ENCODE measurements at regions of chr9 and their contacts with region 1.

Region 1: DNA sequence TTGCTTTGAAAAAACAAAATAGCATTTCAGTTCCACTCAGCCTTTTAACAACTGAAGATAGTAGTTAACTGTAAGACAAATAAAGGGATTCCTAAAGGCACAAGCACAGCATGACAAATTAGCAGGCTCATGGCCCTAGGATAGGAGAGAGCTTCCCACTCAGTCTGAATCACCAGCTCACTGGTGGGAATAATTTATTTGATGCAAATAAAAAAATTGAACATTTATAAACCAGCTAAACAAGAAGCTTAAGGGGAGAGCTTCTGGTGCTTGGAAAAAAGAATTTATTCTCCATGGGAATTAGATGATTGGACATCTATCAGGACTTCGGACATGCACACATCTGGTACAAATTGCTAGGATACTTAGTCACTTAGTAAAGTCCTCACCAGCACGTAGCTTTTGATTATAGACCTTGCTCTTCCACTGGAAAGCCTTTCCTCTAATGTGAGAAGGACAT is 294.1 kb upstream of the TNC start:
- DNase-seq: peak; percentile 75
- H3K4me3 ChIP-seq: no peak overlapping the region
- H3K27ac ChIP-seq: peak overlapping the region; percentile 99
- H3K4me1 ChIP-seq: peaks cover 56% of the 10 kb centered on the region
- H3K27me3 ChIP-seq: no peaks in the 10 kb centered on the region
- CTCF ChIP-seq: no peak

Region 2: GRCh38 chr9:115164511-115164974 is 247.5 kb before region 1 on chr9:
- CTCF ChIA-PET with region 1: interaction called, 4 read pairs
- POLR2A ChIA-PET with region 1: no interaction called
- intact Hi-C with region 1: loop called (anchors 2 kb)
- DNase-seq: peak; percentile 99
- H3K4me3 ChIP-seq: no peak overlapping the region
- H3K27ac ChIP-seq: peak overlapping the region; percentile 66
- H3K4me1 ChIP-seq: peaks cover 14% of the 10 kb centered on the region
- H3K27me3 ChIP-seq: no peaks in the 10 kb centered on the region
- CTCF ChIP-seq: no peak

Region 3: DNA sequence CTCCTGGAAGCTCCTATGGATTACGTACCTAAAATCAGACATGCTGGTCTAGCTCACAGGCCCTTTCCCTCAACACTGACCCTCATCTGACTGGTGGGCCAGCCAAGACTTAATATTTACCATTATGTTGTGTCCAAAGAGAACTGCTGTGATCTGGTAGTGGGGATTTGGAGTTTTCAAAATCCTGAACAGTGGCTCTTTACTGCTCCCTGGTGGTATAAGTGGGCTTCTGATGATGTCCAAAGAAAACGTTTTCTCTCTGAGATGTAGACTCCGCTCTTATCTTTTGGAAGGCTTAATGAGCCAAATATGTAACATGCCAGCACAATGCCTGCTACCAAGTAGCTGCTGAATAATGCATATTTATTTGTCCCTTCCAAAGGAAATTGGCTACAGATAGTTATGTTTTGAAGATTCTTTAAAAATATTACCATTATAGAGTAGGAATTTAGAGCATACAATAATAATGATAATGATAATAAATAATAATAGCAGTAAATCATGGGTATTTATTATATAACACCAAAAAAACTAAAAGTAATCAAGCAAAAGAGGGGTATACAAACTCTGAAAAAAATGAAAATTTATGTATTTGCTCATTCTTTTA is 112.5 kb after region 1 on chr9:
- CTCF ChIA-PET with region 1: no interaction called
- POLR2A ChIA-PET with region 1: no interaction called
- intact Hi-C with region 1: loop called (anchors 1 kb)
- DNase-seq: peak; percentile 95
- H3K4me3 ChIP-seq: no peak overlapping the region
- H3K27ac ChIP-seq: peak overlapping the region; percentile 68
- H3K4me1 ChIP-seq: peaks cover 21% of the 10 kb centered on the region
- H3K27me3 ChIP-seq: no peaks in the 10 kb centered on the region
- CTCF ChIP-seq: peak; percentile 89

Region 4: GRCh38 chr9:115864581-115864980 is 452.6 kb after region 1 on chr9:
- CTCF ChIA-PET with region 1: no interaction called
- POLR2A ChIA-PET with region 1: no interaction called
- intact Hi-C with region 1: loop called (anchors 1 kb)
- DNase-seq: peak; percentile 96
- H3K4me3 ChIP-seq: no peak overlapping the region
- H3K27ac ChIP-seq: peak overlapping the region; percentile 99
- H3K4me1 ChIP-seq: peaks cover 61% of the 10 kb centered on the region
- H3K27me3 ChIP-seq: no peaks in the 10 kb centered on the region
- CTCF ChIP-seq: no peak

Region 5: DNA sequence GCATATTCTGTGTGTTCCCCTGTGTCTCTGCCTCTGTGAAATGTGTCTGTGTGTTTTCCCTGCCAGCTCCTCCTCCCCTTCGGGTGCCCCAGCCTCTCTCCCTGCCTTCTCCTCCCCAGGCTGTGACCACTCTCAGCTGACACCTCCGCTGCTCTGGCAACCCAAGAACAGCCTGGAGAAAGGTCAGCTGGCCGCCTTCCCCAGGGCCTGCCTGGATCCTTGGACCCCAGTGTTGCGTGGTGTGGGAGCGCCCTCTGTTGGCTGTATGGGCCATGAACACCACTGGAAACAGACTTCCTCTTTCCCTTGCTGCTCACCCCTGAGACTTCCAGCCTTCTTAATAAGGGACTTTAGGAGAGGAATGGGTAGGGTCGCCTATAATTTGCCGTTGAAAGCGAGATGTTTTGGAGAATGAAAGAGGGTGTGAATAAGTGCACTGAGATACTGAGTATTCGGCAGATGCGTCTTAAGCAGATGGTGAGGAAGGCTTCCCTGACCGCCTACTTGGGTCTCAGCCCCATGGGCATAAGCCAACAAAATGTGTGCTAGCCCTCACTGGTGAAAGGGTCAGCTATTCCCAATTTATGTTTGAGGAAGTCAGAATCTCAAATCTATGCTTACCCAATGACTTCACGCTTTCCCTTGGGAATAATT is 1160.2 kb after region 1 on chr9:
- CTCF ChIA-PET with region 1: no interaction called
- POLR2A ChIA-PET with region 1: no interaction called
- intact Hi-C with region 1: loop called (anchors 5 kb)
- DNase-seq: peak; percentile 82
- H3K4me3 ChIP-seq: no peak overlapping the region
- H3K27ac ChIP-seq: peak overlapping the region; percentile 58
- H3K4me1 ChIP-seq: peaks cover 21% of the 10 kb centered on the region
- H3K27me3 ChIP-seq: no peaks in the 10 kb centered on the region
- CTCF ChIP-seq: peak; percentile 99

Measured in A673 (cell line).